HCT116 (cell line): ENCODE measurements at regions of chr19 and their contacts with region 1.

Region 1: DNA sequence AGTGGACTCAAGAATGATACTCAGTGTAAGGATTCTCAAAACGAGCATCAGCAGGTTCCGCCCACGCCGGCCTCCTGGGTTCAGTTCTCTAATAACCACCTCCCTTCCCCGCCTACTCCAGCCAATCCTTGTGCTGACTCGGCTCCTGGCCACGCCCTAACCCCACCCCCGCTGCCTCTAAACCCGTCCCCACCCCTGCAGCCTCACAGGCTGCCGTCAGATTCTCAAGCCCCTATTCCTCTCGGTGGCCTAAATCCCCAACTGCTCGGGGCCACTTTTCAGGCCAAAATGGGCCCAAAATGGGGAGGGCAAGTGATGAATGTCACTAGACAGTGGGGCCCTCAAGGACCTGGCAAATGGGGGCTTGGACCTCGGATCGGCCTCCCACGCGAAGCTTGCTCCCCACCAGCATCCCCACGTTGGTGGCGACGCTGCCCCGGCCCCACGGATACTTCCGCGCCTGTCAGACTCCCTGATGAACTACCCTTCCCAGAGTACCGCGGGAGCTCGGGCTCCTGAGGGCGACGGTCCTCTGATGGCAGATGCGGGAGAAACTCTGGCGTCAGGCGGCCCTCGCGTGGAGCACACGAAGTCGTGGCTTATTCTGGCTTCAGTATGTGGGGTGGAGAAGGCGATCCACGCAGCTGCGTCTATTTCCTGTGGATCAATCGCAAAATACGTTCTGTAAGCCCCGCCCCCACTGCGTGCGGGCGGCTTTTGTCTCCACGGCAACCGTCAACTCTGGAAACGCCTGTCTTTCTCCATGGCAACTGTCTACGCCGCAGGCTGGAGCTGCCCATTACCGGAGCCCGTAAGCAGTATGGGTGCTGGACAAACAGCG is 24.8 kb downstream of the ZNF473 start:
- DNase-seq: no peak
- ATAC-seq: no peak
- H3K4me3 ChIP-seq: no peak overlapping the region
- H3K27ac ChIP-seq: no peak overlapping the region
- H3K4me1 ChIP-seq: no peaks in the 10 kb centered on the region
- H3K27me3 ChIP-seq: no peaks in the 10 kb centered on the region
- CTCF ChIP-seq: no peak
- POLR2A ChIP-seq: no peak
- RAD21 ChIP-seq: no peak

Region 2: GRCh38 chr19:49987159-49987698 is 63.4 kb before region 1 on chr19:
- CTCF ChIA-PET with region 1: no interaction called
- POLR2A ChIA-PET with region 1: no interaction called
- RAD21 ChIA-PET with region 1: no interaction called
- intact Hi-C with region 1: no loop called
- DNase-seq: peak; percentile 88
- ATAC-seq: peak; percentile 75
- H3K4me3 ChIP-seq: no peak overlapping the region
- H3K27ac ChIP-seq: no peak overlapping the region
- H3K4me1 ChIP-seq: no peaks in the 10 kb centered on the region
- H3K27me3 ChIP-seq: no peaks in the 10 kb centered on the region
- CTCF ChIP-seq: no peak
- POLR2A ChIP-seq: no peak
- RAD21 ChIP-seq: peak; percentile 21; the same call in 1 of the 2 replicates

Region 3: GRCh38 chr19:50067575-50067974 is 17.0 kb after region 1 on chr19:
- CTCF ChIA-PET with region 1: no interaction called
- POLR2A ChIA-PET with region 1: no interaction called
- RAD21 ChIA-PET with region 1: no interaction called
- intact Hi-C with region 1: loop called (anchors 2 kb)
- DNase-seq: no peak
- ATAC-seq: no peak
- H3K4me3 ChIP-seq: no peak overlapping the region
- H3K27ac ChIP-seq: no peak overlapping the region
- H3K4me1 ChIP-seq: no peaks in the 10 kb centered on the region
- H3K27me3 ChIP-seq: no peaks in the 10 kb centered on the region
- CTCF ChIP-seq: no peak
- POLR2A ChIP-seq: no peak
- RAD21 ChIP-seq: no peak